ENCODE measurements at regions of chr10 and their contacts with region 1.

Region 1: DNA sequence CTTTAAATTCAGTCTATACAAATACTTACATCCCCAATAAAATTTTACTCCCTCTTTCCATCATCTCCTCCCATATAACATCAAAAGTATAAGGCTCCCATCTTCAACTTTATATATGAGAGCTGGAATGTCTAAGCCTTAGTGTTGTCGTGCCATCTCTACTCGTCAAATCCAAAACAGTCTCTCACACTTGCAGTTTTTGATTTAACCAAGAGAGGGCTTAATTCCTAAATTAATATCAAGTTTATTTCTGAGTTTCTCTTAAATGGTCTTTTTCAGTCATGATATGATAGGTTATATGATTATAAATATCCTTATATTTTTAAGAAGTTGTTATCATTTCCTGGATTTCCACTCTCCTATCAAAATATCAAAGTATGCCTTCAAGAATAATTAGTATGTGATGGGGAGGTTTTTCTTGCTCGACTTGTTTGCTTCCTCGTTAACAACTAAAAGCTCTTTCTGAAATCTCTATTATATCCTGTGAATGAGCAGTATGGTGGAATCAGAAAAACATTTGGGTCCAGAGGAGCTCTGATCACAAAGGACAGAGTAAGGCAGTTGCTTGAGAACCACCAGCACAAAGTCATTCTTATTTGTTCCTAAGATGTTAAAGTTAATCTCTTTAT is 12.5 kb upstream of the LIPK start:
- DNase-seq: peak; percentile 30
- H3K4me3 ChIP-seq: no peak overlapping the region
- H3K27ac ChIP-seq: no peak overlapping the region
- H3K4me1 ChIP-seq: no peaks in the 10 kb centered on the region
- H3K27me3 ChIP-seq: no peaks in the 10 kb centered on the region
- CTCF ChIP-seq: peak in 1 of 2 donors; percentile 6
- POLR2A ChIP-seq: no peak

Region 2: GRCh38 chr10:88680958-88681357 is 12.5 kb before region 1 on chr10:
- CTCF ChIA-PET with region 1: interaction called, 21 read pairs
- POLR2A ChIA-PET with region 1: no interaction called
- dilution Hi-C with region 1: no loop called
- intact Hi-C with region 1: no loop called
- DNase-seq: peak; percentile 42
- H3K4me3 ChIP-seq: no peak overlapping the region
- H3K27ac ChIP-seq: peak overlapping the region; percentile 45
- H3K4me1 ChIP-seq: peaks cover 9% of the 10 kb centered on the region
- H3K27me3 ChIP-seq: no peaks in the 10 kb centered on the region
- CTCF ChIP-seq: no peak
- POLR2A ChIP-seq: no peak

Region 3: DNA sequence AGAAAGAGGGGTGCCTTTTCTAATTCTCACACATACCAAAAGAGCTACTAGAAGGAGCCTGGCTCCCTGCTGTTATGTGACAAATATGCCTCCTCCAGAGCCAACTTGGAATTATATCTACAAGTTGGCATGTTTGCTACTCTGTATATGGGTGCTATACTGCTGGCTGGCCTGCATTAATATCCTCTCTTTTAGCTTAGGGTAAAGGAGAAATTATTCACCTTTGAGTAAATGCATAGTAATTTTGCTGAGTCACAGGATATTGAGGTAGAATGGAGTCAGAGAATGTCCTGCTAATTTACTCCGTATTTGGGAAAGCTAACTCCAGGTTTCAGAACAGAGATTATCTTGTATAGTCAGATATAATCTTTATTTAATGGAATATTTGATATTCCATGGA is 42.2 kb after region 1 on chr10:
- CTCF ChIA-PET with region 1: interaction called, 11 read pairs
- POLR2A ChIA-PET with region 1: no interaction called
- dilution Hi-C with region 1: no loop called
- intact Hi-C with region 1: no loop called
- DNase-seq: no peak
- H3K4me3 ChIP-seq: no peak overlapping the region
- H3K27ac ChIP-seq: no peak overlapping the region
- H3K4me1 ChIP-seq: no peaks in the 10 kb centered on the region
- H3K27me3 ChIP-seq: peaks cover 2 to 3% of the 10 kb centered on the region in 2 experiments
- CTCF ChIP-seq: no peak
- POLR2A ChIP-seq: no peak

Region 4: DNA sequence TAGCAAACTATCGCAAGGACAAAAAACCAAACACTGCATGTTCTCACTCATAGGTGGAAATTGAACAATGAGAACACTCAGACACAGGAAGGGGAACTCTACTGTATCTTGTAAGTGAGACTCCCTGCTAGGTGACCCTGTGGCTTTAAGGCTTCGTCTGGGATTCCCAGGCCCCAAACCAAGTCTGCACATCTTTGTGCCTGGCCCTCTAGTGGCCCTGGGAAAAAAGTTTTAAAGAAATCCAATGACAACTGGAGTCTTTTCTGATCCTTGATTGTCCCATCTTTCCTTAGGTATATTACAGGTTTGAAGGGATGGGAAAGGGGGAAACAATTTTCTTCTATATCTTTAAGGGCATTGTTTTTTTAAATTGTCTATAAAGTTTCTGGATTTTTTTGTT is 98.4 kb after region 1 on chr10:
- CTCF ChIA-PET with region 1: interaction called, 30 read pairs
- POLR2A ChIA-PET with region 1: no interaction called
- dilution Hi-C with region 1: no loop called
- intact Hi-C with region 1: loop called (anchors 1 kb)
- DNase-seq: peak; percentile 33
- H3K4me3 ChIP-seq: no peak overlapping the region
- H3K27ac ChIP-seq: no peak overlapping the region
- H3K4me1 ChIP-seq: no peaks in the 10 kb centered on the region
- H3K27me3 ChIP-seq: no peaks in the 10 kb centered on the region
- CTCF ChIP-seq: peak; percentile 49 to 67
- POLR2A ChIP-seq: no peak

Region 5: GRCh38 chr10:88810196-88810961 is 116.9 kb after region 1 on chr10:
- CTCF ChIA-PET with region 1: interaction called, 25 read pairs
- POLR2A ChIA-PET with region 1: no interaction called
- dilution Hi-C with region 1: no loop called
- intact Hi-C with region 1: loop called (anchors 1 kb)
- DNase-seq: peak; percentile 64
- H3K4me3 ChIP-seq: no peak overlapping the region
- H3K27ac ChIP-seq: no peak overlapping the region
- H3K4me1 ChIP-seq: peaks cover 3% of the 10 kb centered on the region
- H3K27me3 ChIP-seq: no peaks in the 10 kb centered on the region
- CTCF ChIP-seq: peak; percentile 69 to 72
- POLR2A ChIP-seq: no peak